ENCODE measurements at regions of chr13 and their contacts with region 1.

Region 1: GRCh38 chr13:45047394-45048310 is 58.3 kb downstream of the GPALPP1 start:
- DNase-seq: peak; percentile 82
- H3K27ac ChIP-seq: peak overlapping the region; percentile 57; the same call in 1 of the 2 replicates
- CTCF ChIP-seq: peak; percentile 94

Region 2: DNA sequence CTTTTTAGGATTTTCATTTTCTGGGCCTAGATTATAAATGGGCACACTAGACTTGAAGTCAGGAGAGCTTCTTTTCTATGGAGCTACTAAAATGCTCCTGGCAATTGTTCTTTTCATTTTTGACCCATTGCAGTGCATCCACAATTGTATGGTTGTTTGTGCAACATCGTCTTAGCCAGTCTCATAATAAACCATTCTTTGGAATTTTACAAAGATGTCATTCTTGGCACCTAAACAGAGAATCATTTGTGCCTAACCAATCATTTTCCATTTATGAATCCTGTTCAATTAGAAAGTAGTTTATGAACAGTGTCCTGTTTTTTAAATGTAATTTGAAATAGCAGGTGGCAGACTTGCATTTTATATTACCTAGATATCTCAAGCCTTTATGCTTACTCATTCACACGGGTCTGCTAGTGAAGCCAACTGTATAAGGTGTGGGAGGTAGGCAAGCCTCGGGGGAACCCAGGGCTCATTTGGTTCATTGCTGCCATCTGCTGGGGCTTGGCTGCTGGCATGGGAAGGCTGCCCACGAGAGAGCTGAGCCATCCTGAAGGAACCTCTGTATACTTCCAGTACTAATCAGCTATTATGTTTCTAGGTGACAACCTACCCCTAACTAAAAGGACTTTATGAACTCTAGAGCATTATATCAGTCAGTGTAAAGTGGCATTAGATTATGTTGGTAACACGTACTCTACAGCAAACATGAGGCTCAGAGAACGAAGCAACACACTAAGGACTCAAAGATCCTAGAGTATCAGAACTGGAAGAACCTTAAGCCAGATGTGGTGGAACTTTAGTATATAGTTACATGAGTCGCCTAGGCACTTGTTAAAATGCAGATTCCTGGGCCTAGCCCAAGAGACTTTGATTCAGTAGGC is 233.3 kb after region 1 on chr13:
- CTCF ChIA-PET with region 1: interaction called, 27 read pairs
- POLR2A ChIA-PET with region 1: no interaction called
- DNase-seq: peak; percentile 95
- H3K27ac ChIP-seq: peak overlapping the region; percentile 54
- CTCF ChIP-seq: peak; percentile 90

Region 3: DNA sequence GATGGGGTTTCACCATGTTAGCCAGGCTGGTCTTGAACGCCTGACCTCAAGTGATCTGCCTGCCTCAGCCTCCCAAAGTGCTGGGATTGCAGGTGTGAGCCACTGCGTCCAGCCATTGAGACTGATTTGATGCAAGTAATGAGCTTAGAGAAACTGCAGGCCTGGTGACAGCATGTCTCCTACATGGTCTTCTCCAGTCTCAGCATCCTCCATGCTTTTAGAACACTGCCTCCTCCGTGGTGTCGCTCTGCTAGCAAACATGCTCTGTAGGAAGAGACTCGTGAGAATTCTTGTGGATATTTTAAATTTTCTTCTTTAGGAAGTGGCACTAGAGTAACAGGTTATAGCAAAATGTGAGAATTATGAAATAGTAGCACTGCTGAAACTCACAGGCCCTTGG is 256.2 kb after region 1 on chr13:
- CTCF ChIA-PET with region 1: interaction called, 12 read pairs
- POLR2A ChIA-PET with region 1: no interaction called
- DNase-seq: no peak
- H3K27ac ChIP-seq: no peak overlapping the region
- CTCF ChIP-seq: no peak

Region 4: DNA sequence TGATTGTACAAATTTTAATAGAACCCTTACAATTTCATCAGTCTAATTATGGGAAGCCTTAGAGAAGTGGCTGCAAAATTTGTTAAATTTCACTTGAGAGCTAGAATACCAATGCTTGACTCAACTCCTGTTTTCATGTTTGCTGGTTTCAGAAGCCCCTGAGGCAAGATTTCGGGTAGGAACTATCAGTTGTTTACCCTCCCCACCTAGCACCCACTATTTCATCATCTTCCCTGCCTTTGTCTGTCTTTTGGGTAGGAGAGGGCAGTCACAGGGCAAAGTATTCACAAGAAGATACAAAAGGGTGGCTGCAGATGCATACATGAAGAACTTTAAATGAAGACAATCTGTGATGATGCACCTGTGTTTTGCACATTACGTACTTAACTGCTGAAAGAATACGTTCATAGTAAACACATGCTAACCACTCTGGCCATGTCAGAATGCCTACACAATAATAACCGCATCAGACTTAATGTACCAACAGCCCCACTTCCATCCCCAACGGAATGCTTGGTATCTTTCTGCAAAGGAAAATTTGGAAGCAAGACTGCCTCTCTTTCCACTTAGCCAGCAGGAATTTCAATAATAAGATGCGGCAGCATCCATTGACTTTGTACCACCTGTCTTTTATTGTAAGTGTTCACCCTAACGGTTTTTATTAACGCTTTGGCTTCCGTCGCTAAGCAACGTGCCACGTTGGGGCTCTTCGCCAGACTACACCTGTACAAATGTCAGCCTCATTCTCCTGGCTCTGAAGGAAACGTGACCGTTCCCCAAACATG is 262.9 kb after region 1 on chr13:
- CTCF ChIA-PET with region 1: interaction called, 12 read pairs
- POLR2A ChIA-PET with region 1: no interaction called
- DNase-seq: no peak
- H3K27ac ChIP-seq: no peak overlapping the region
- CTCF ChIP-seq: no peak

Measured in RWPE1 (cell line).